Tibial artery (tissue), 4 donors: ENCODE measurements at regions of chr1 and their contacts with region 1.

Region 1: DNA sequence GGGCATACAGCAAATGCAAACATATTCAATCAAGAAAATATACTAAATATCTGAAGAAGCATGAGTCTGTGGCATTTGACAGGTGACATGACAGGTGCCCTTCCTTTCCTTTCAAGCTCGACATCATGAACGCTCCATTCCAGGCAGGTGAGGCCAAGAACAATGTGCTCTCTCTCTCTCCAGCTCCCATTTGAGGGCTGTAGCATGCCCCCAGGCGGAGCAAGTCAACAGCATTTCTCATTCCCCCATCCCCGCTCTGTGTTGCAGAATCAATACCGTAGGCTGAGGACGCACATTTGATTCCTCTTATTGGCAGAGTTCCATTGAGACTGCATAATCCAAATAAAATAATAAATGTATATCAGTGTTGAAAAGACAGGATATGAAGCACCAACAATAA is 24.6 kb upstream of the PLPPR4 start:
- DNase-seq: no peak
- H3K4me3 ChIP-seq: no peak overlapping the region
- H3K27ac ChIP-seq: no peak overlapping the region
- H3K4me1 ChIP-seq: no peaks in the 10 kb centered on the region
- H3K27me3 ChIP-seq: no peaks in the 10 kb centered on the region
- CTCF ChIP-seq: no peak

Region 2: GRCh38 chr1:99305626-99306025 is 65.9 kb after region 1 on chr1:
- intact Hi-C with region 1: no loop called
- DNase-seq: no peak
- H3K4me3 ChIP-seq: no peak overlapping the region
- H3K27ac ChIP-seq: no peak overlapping the region
- H3K4me1 ChIP-seq: no peaks in the 10 kb centered on the region
- H3K27me3 ChIP-seq: no peaks in the 10 kb centered on the region
- CTCF ChIP-seq: no peak

Region 3: GRCh38 chr1:99326215-99326949 is 86.7 kb after region 1 on chr1:
- intact Hi-C with region 1: loop called (anchors 2 kb)
- DNase-seq: no peak
- H3K4me3 ChIP-seq: no peak overlapping the region
- H3K27ac ChIP-seq: no peak overlapping the region
- H3K4me1 ChIP-seq: no peaks in the 10 kb centered on the region
- H3K27me3 ChIP-seq: no peaks in the 10 kb centered on the region
- CTCF ChIP-seq: peak in 1 of 2 experiments; percentile 6